Heart right ventricle (tissue), 16 donors: ENCODE measurements at regions of chr16 and their contacts with region 1.

Region 1: DNA sequence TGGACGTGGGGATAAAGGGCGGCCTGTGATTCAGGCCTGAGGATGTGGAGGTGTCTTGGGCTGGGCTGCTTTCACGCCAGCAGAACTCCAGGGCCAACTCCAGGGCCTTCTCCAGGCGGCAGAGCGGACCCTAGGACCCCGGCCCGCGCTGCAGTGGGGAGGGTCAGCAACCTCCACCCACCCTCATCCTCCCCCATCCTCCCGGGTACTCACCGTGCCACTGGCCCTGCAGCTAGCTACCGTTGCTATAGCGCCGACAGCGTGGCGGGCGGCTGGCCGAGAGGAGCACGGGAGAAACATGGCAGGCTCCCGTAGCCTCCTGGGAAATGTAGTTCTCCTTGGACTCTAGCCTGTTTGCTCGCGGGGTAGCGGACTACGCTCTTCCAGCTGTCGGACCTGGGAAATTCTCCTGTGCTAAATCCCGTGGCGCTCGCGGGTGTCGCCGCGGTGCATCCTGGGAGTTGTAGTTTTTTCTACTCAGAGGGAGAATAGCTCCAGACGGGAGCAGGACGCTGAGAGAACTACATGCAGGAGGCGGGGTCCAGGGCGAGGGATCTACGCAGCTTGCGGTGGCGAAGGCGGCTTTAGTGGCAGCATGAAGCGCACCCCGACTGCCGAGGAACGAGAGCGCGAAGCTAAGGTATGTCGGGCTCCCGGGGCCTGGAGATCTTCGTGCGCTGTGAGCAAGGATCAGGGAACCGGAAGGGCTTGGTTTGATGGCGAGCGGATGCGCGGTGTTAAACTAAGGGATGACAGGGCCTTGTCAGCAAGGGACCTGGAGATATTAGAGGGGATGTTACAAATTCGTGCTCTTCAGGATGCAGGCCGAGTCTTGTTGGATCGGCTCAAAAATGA is at the starts of genes FTO and RPGRIP1L:
- DNase-seq: peak; percentile 97 to 100
- ATAC-seq: peak; percentile 99 to 100 (median 100)
- H3K4me3 ChIP-seq: peak within 1 kb of the TSS; percentile 66 to 80 (median 76)
- H3K27ac ChIP-seq: peak within 1 kb of the TSS in 9 of 10 donors; percentile 28 to 81 (median 68)
- H3K4me1 ChIP-seq: peaks cover 0 to 32% (median 17%) of the 10 kb centered on the region in 9 donors
- H3K27me3 ChIP-seq: no peaks in the 10 kb centered on the region
- CTCF ChIP-seq: peak in 3 of 9 donors; percentile 3 to 28 (median 20)
- total RNA-seq, gene FTO: 77.7 to 103 (median 90.7) TPM
- total RNA-seq, gene RPGRIP1L: 1.6 to 3.7 (median 2.4) TPM

Region 2: GRCh38 chr16:53743149-53743566 is 39.3 kb after region 1 on chr16:
- intact Hi-C with region 1: loop called in 1 of 10 experiments (anchors 2 kb)
- DNase-seq: no peak
- ATAC-seq: no peak
- H3K4me3 ChIP-seq: no peak overlapping the region
- H3K27ac ChIP-seq: no peak overlapping the region
- H3K4me1 ChIP-seq: peaks cover 0 to 48% (median 27%) of the 10 kb centered on the region in 9 donors
- H3K27me3 ChIP-seq: no peaks in the 10 kb centered on the region
- CTCF ChIP-seq: peak in 7 of 9 donors; percentile 40 to 63 (median 52)

Region 3: DNA sequence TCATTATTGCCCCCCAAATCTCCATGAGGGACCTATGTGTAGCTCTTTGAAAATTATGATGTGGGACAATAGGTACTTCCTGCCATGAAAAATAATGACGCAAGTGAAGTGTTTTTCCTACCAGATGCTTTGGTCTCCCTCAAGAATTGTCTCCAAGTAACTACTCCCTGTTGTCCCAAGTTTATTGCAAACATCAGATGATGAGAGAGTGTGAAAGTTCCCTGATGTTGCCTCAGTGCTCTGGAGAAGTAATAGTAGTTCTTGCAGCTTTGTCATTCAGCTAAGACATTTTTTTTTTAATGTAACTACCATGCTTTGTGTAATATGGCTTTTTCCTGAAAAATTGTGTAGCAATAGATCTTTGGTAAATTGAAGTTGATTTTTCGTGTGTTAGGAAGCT is 1825.2 kb after region 1 on chr16:
- intact Hi-C with region 1: loop called in 1 of 10 experiments (anchors 10 kb)
- DNase-seq: no peak
- ATAC-seq: peak in 6 of 8 donors; percentile 55 to 86 (median 80)
- H3K4me3 ChIP-seq: no peak overlapping the region
- H3K27ac ChIP-seq: peak overlapping the region in 5 of 10 donors; percentile 0 to 27 (median 16)
- H3K4me1 ChIP-seq: peaks cover 0 to 16% (median 0%) of the 10 kb centered on the region in 9 donors
- H3K27me3 ChIP-seq: no peaks in the 10 kb centered on the region
- CTCF ChIP-seq: no peak